ENCODE measurements at regions of chr5 and their contacts with region 1.

Region 1: DNA sequence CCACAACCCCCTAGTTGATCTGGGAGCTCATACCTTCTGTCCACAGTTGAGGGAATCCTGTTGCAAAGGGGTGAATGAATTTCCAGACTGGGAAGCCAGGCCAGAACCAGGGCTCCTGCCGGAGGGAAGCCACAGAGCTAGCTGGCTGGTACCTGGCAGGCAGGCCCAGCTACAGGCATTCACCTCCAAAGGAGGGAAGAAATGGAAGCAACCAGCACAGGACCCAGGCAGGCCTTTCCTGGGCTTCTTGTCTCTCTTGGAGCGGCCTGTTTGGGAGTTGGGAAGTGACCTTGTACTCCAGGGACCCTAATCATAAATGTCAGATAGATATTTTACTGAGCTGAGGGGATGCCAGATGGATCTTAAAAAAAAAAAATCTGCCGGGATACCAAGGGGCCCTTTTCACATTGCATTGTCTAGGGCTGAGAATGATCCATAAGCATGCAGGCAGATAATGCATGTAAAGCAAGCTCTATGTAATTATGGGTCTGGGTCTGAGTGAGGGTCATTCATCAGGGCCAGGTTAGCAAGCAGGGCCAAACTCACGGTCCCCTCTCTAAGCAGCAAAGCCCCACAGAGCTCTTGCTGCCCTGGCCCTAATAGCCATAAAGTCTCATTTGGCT is 8.4 kb downstream of the NR2F1 start:
- DNase-seq: no peak
- ATAC-seq: no peak
- H3K4me3 Mint-ChIP-seq: no peak overlapping the region
- H3K27ac Mint-ChIP-seq: no peak overlapping the region
- H3K4me1 Mint-ChIP-seq: peaks cover 25% of the 10 kb centered on the region
- H3K27me3 Mint-ChIP-seq: peaks cover 80% of the 10 kb centered on the region

Region 2: GRCh38 chr5:93557021-93557604 is 34.3 kb before region 1 on chr5:
- CTCF ChIA-PET with region 1: no interaction called
- POLR2A ChIA-PET with region 1: interaction called, 13 read pairs
- intact Hi-C with region 1: no loop called
- DNase-seq: no peak
- ATAC-seq: no peak
- H3K4me3 Mint-ChIP-seq: no peak overlapping the region
- H3K27ac Mint-ChIP-seq: no peak overlapping the region
- H3K4me1 Mint-ChIP-seq: no peaks in the 10 kb centered on the region
- H3K27me3 Mint-ChIP-seq: peaks cover 27% of the 10 kb centered on the region

Region 3: DNA sequence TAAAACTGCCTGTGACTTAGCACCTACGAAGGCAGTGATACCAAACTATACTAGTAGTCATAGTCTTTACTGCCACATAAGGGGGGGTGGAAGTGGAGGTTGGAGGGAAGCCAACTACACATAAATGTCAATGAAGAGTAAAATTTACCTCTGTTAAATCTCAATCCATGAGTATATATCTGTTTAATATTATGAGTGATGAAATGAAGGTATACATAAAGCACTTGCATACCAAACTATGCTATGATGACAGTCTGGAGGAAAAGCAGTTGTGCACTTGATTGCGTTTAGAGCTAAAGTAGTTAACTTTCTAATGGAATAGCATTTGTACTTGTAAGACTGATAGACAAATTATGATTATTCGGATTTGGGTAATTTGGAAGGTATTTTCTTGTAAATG is 279.2 kb after region 1 on chr5:
- CTCF ChIA-PET with region 1: no interaction called
- POLR2A ChIA-PET with region 1: no interaction called
- intact Hi-C with region 1: no loop called
- DNase-seq: no peak
- ATAC-seq: no peak
- H3K4me3 Mint-ChIP-seq: no peak overlapping the region
- H3K27ac Mint-ChIP-seq: no peak overlapping the region
- H3K4me1 Mint-ChIP-seq: peaks cover 12% of the 10 kb centered on the region
- H3K27me3 Mint-ChIP-seq: no peaks in the 10 kb centered on the region

Region 4: GRCh38 chr5:94021246-94021645 is 429.8 kb after region 1 on chr5:
- CTCF ChIA-PET with region 1: no interaction called
- POLR2A ChIA-PET with region 1: no interaction called
- intact Hi-C with region 1: no loop called
- DNase-seq: no peak
- ATAC-seq: no peak
- H3K4me3 Mint-ChIP-seq: no peak overlapping the region
- H3K27ac Mint-ChIP-seq: no peak overlapping the region
- H3K4me1 Mint-ChIP-seq: no peaks in the 10 kb centered on the region
- H3K27me3 Mint-ChIP-seq: no peaks in the 10 kb centered on the region